ENCODE measurements at regions of chr10 and their contacts with region 1.

Region 1: GRCh38 chr10:116385994-116386809 is 41.4 kb upstream of the PNLIPRP3 start:
- DNase-seq: peak; percentile 4
- ATAC-seq: no peak
- H3K4me3 ChIP-seq: no peak overlapping the region
- H3K4me3 Mint-ChIP-seq: no peak overlapping the region
- H3K27ac ChIP-seq: no peak overlapping the region
- H3K27ac Mint-ChIP-seq: no peak overlapping the region
- H3K4me1 ChIP-seq: no peaks in the 10 kb centered on the region
- H3K4me1 Mint-ChIP-seq: no peaks in the 10 kb centered on the region
- H3K27me3 ChIP-seq: no peaks in the 10 kb centered on the region
- H3K27me3 Mint-ChIP-seq: peaks cover 8% of the 10 kb centered on the region
- CTCF ChIP-seq: peak; percentile 54

Region 2: GRCh38 chr10:115355162-115355760 is 1030.9 kb before region 1 on chr10:
- CTCF ChIA-PET with region 1: no interaction called
- POLR2A ChIA-PET with region 1: no interaction called
- intact Hi-C with region 1: loop called (anchors 5 kb)
- DNase-seq: peak; percentile 14
- ATAC-seq: no peak
- H3K4me3 ChIP-seq: no peak overlapping the region
- H3K4me3 Mint-ChIP-seq: no peak overlapping the region
- H3K27ac ChIP-seq: no peak overlapping the region
- H3K27ac Mint-ChIP-seq: no peak overlapping the region
- H3K4me1 ChIP-seq: no peaks in the 10 kb centered on the region
- H3K4me1 Mint-ChIP-seq: no peaks in the 10 kb centered on the region
- H3K27me3 ChIP-seq: no peaks in the 10 kb centered on the region
- H3K27me3 Mint-ChIP-seq: no peaks in the 10 kb centered on the region
- CTCF ChIP-seq: peak; percentile 26

Region 3: GRCh38 chr10:116287906-116288501 is 98.2 kb before region 1 on chr10:
- CTCF ChIA-PET with region 1: no interaction called
- POLR2A ChIA-PET with region 1: no interaction called
- intact Hi-C with region 1: no loop called
- DNase-seq: no peak
- ATAC-seq: no peak
- H3K4me3 ChIP-seq: no peak overlapping the region
- H3K4me3 Mint-ChIP-seq: no peak overlapping the region
- H3K27ac ChIP-seq: no peak overlapping the region
- H3K27ac Mint-ChIP-seq: no peak overlapping the region
- H3K4me1 ChIP-seq: no peaks in the 10 kb centered on the region
- H3K4me1 Mint-ChIP-seq: no peaks in the 10 kb centered on the region
- H3K27me3 ChIP-seq: no peaks in the 10 kb centered on the region
- H3K27me3 Mint-ChIP-seq: peaks cover 2% of the 10 kb centered on the region
- CTCF ChIP-seq: no peak

Region 4: DNA sequence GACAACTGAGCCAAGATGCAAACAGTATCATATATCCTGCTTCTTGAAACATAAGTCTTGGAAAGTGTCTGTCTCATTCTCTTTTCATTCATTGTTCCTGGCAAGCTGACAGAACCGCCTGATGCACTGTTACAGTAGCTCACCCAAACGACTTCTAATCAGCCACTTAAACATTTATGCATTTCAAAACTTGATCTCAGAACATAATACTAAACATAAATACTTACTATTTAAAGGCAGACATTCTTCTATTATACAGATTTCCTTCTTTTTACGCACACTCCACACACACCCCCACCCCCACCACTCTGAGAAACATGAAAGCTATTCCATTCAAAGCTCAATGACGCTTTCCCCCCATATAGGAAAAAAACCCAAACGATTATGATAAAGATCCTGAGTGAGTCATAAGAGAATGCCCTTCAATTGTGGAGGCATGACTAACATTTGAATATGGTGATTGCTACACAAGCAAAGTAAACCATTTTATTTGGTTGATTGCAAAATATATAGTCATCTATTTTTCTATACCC is 588.3 kb after region 1 on chr10:
- CTCF ChIA-PET with region 1: no interaction called
- POLR2A ChIA-PET with region 1: no interaction called
- intact Hi-C with region 1: no loop called
- DNase-seq: no peak
- ATAC-seq: no peak
- H3K4me3 ChIP-seq: no peak overlapping the region
- H3K4me3 Mint-ChIP-seq: no peak overlapping the region
- H3K27ac ChIP-seq: no peak overlapping the region
- H3K27ac Mint-ChIP-seq: no peak overlapping the region
- H3K4me1 ChIP-seq: no peaks in the 10 kb centered on the region
- H3K4me1 Mint-ChIP-seq: no peaks in the 10 kb centered on the region
- H3K27me3 ChIP-seq: no peaks in the 10 kb centered on the region
- H3K27me3 Mint-ChIP-seq: peaks cover 5% of the 10 kb centered on the region
- CTCF ChIP-seq: no peak

Measured in B cell (primary cell).